B cell (primary cell): ENCODE measurements at regions of chr15 and their contacts with region 1.

Region 1: GRCh38 chr15:65304389-65305144 is at the start of gene RNU5B-1:
- DNase-seq: peak; percentile 94
- ATAC-seq: peak; percentile 77
- H3K4me3 ChIP-seq: peak within 1 kb of the TSS; percentile 56 to 83 (median 67)
- H3K4me3 Mint-ChIP-seq: peak within 1 kb of the TSS; percentile 96
- H3K27ac ChIP-seq: peak within 1 kb of the TSS; percentile 95 to 98
- H3K27ac Mint-ChIP-seq: peak within 1 kb of the TSS; percentile 93
- H3K4me1 ChIP-seq: peaks cover 7 to 19% of the 10 kb centered on the region in 2 donors
- H3K4me1 Mint-ChIP-seq: peaks cover 28% of the 10 kb centered on the region
- H3K27me3 ChIP-seq: no peaks in the 10 kb centered on the region
- H3K27me3 Mint-ChIP-seq: no peaks in the 10 kb centered on the region
- CTCF ChIP-seq: peak; percentile 96
- total RNA-seq, gene RNU5B-1: 17.4 and 21.7 TPM in 2 replicates

Region 2: GRCh38 chr15:65054333-65055200 is 250.0 kb before region 1 on chr15:
- CTCF ChIA-PET with region 1: interaction called, 3 read pairs
- POLR2A ChIA-PET with region 1: no interaction called
- intact Hi-C with region 1: loop called (anchors 2 kb)
- DNase-seq: peak; percentile 68
- ATAC-seq: peak; percentile 53
- H3K4me3 ChIP-seq: no peak overlapping the region
- H3K4me3 Mint-ChIP-seq: no peak overlapping the region
- H3K27ac ChIP-seq: no peak overlapping the region
- H3K27ac Mint-ChIP-seq: no peak overlapping the region
- H3K4me1 ChIP-seq: peaks cover 8 to 13% of the 10 kb centered on the region in 2 donors
- H3K4me1 Mint-ChIP-seq: peaks cover 11% of the 10 kb centered on the region
- H3K27me3 ChIP-seq: peaks cover 0 to 5% (median 0%) of the 10 kb centered on the region in 4 experiments
- H3K27me3 Mint-ChIP-seq: no peaks in the 10 kb centered on the region
- CTCF ChIP-seq: peak; percentile 76

Region 3: DNA sequence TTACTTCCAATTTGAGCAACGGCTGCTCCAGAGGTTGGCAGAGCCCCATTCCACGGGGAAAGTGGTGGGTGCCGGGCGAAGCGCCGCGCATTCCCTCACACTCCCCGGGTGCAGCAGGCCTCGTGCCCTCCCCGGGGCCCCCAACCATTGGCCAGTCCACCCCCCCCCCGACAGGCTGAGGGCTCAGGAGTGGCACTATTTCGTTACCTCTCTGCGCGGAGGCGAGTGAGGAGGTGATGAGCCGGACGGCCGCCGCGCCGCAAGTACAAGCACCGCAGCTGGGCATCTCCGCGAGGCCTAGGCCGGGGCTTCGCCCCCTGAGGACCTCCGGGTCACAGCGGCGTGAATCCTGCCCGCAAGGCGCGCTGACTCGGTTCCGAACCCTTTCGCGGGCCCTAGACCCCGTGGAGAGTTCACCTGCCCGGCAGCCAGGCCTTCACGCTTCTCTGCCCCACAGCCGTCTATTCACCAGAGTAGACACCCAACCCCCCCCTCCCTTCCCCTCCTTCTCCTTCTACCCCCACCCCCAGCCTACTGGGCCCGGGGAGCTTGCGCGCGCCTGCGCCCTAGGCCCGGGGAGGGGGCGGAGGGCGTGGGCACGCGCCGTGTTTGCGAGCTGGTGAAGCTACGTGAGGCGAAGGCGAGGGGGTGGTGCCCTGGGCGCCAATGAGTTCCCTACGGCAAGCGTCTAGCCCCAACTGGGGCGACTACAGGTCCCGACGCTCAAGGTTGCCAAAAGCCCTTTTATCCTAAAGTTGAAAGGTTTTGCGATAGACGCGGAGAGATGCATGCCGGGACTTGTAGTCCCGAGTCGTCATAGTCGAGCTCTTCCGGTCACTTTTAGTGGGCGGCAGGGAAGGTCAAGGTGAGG is 119.5 kb before region 1 on chr15 and contains the start of gene CLPX:
- CTCF ChIA-PET with region 1: interaction called, 6 read pairs
- POLR2A ChIA-PET with region 1: interaction called, 23 read pairs
- intact Hi-C with region 1: loop called (anchors 2 kb)
- DNase-seq: peak; percentile 96
- ATAC-seq: peak; percentile 89
- H3K4me3 ChIP-seq: peak within 1 kb of the TSS; percentile 58 to 94 (median 88)
- H3K4me3 Mint-ChIP-seq: peak within 1 kb of the TSS; percentile 96
- H3K27ac ChIP-seq: peak within 1 kb of the TSS; percentile 74 to 88
- H3K27ac Mint-ChIP-seq: peak within 1 kb of the TSS; percentile 97
- H3K4me1 ChIP-seq: peaks cover 17 to 20% of the 10 kb centered on the region in 2 donors
- H3K4me1 Mint-ChIP-seq: peaks cover 26% of the 10 kb centered on the region
- H3K27me3 ChIP-seq: no peaks in the 10 kb centered on the region
- H3K27me3 Mint-ChIP-seq: no peaks in the 10 kb centered on the region
- CTCF ChIP-seq: no peak
- total RNA-seq, gene CLPX: 54.5 and 63.1 TPM in 2 replicates

Region 4: GRCh38 chr15:65292938-65293518 is 11.5 kb before region 1 on chr15:
- CTCF ChIA-PET with region 1: interaction called, 8 read pairs
- POLR2A ChIA-PET with region 1: interaction called, 25 read pairs
- intact Hi-C with region 1: loop called (anchors 1 kb)
- DNase-seq: no peak
- ATAC-seq: no peak
- H3K4me3 ChIP-seq: peak overlapping the region in 1 of 5 experiments; percentile 10
- H3K4me3 Mint-ChIP-seq: peak overlapping the region; percentile 11
- H3K27ac ChIP-seq: peak overlapping the region in 1 of 2 donors; percentile 39
- H3K27ac Mint-ChIP-seq: no peak overlapping the region
- H3K4me1 ChIP-seq: peaks cover 31 to 43% of the 10 kb centered on the region in 2 donors
- H3K4me1 Mint-ChIP-seq: peaks cover 35% of the 10 kb centered on the region
- H3K27me3 ChIP-seq: no peaks in the 10 kb centered on the region
- H3K27me3 Mint-ChIP-seq: no peaks in the 10 kb centered on the region
- CTCF ChIP-seq: no peak

Region 5: DNA sequence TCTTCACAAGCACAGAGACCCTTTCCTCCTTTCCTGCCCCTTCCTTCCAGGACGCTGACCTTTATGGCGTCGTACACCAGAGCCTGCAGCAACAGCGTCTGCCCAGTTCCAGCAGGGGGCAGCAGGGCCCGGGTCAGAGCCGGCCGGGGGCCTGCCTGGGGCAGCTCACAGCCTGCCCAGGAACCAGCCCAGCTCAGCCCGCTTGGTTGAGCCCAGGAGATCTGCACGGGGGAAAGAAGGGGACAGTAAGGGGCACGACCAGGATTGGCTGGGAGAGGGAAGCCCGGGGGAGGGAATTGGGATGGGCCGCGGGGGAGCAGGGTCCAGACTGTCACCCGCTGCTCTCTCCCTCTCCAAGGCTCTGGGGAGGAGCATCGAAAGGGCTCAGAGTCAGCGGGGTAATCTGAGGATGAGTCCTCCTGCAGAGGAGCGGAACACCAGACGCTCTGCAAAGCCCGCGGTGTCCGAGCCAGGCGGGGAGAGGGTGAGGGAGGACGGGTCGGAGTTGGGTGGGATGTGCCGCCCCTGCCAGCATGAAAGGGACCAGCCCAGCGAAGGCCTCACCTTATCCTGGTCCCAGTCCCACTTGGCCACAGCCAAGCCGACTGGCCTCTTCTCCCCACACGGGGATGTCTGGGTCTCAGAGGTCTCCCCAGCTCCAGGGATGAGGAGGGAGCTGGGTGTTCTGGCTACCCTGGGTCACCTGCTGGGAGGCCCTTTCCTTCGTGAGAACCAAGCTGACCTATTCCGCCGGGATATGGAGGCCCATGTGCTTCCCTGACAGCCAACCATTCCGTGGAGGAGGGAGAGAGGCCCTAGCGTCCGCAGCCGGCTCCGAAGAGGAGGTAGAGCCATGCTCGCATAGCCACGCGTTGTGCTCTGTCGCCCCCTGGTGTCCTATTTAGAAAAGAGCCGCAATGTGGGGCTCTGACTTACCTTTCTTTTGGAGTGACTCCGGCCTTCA is 80.6 kb after region 1 on chr15:
- CTCF ChIA-PET with region 1: interaction called, 14 read pairs
- POLR2A ChIA-PET with region 1: interaction called, 6 read pairs
- intact Hi-C with region 1: no loop called
- DNase-seq: peak; percentile 89
- ATAC-seq: peak; percentile 87
- H3K4me3 ChIP-seq: peak overlapping the region; percentile 50 to 67 (median 58)
- H3K4me3 Mint-ChIP-seq: peak overlapping the region; percentile 92
- H3K27ac ChIP-seq: peak overlapping the region in 1 of 2 donors; percentile 36
- H3K27ac Mint-ChIP-seq: peak overlapping the region; percentile 15
- H3K4me1 ChIP-seq: peaks cover 7 to 13% of the 10 kb centered on the region in 2 donors
- H3K4me1 Mint-ChIP-seq: peaks cover 16% of the 10 kb centered on the region
- H3K27me3 ChIP-seq: peaks cover 0 to 21% (median 4%) of the 10 kb centered on the region in 4 experiments
- H3K27me3 Mint-ChIP-seq: peaks cover 44% of the 10 kb centered on the region
- CTCF ChIP-seq: peak; percentile 79

Region 6: GRCh38 chr15:65558336-65558735 is 253.8 kb after region 1 on chr15:
- CTCF ChIA-PET with region 1: no interaction called
- POLR2A ChIA-PET with region 1: no interaction called
- intact Hi-C with region 1: no loop called
- DNase-seq: no peak
- ATAC-seq: no peak
- H3K4me3 ChIP-seq: no peak overlapping the region
- H3K4me3 Mint-ChIP-seq: no peak overlapping the region
- H3K27ac ChIP-seq: no peak overlapping the region
- H3K27ac Mint-ChIP-seq: no peak overlapping the region
- H3K4me1 ChIP-seq: no peaks in the 10 kb centered on the region
- H3K4me1 Mint-ChIP-seq: no peaks in the 10 kb centered on the region
- H3K27me3 ChIP-seq: no peaks in the 10 kb centered on the region
- H3K27me3 Mint-ChIP-seq: no peaks in the 10 kb centered on the region
- CTCF ChIP-seq: no peak

Region 7: GRCh38 chr15:65682404-65682911 is 377.9 kb after region 1 on chr15:
- CTCF ChIA-PET with region 1: no interaction called
- POLR2A ChIA-PET with region 1: no interaction called
- intact Hi-C with region 1: no loop called
- DNase-seq: no peak
- ATAC-seq: no peak
- H3K4me3 ChIP-seq: no peak overlapping the region
- H3K4me3 Mint-ChIP-seq: no peak overlapping the region
- H3K27ac ChIP-seq: no peak overlapping the region
- H3K27ac Mint-ChIP-seq: peak overlapping the region; percentile 1
- H3K4me1 ChIP-seq: no peaks in the 10 kb centered on the region
- H3K4me1 Mint-ChIP-seq: no peaks in the 10 kb centered on the region
- H3K27me3 ChIP-seq: no peaks in the 10 kb centered on the region
- H3K27me3 Mint-ChIP-seq: no peaks in the 10 kb centered on the region
- CTCF ChIP-seq: no peak